ENCODE measurements at regions of chr10 and their contacts with region 1.

Region 1: GRCh38 chr10:91163269-91163868 is 57.1 kb upstream of the PCGF5 start:
- DNase-seq: peak; percentile 72
- H3K4me3 ChIP-seq: peak overlapping the region; percentile 93 to 98 (median 98)
- H3K27ac ChIP-seq: peak overlapping the region; percentile 94 to 98 (median 97)
- H3K4me1 ChIP-seq: peaks cover 4 to 29% (median 11%) of the 10 kb centered on the region in 4 donors
- H3K27me3 ChIP-seq: no peaks in the 10 kb centered on the region
- CTCF ChIP-seq: peak in 1 of 5 experiments; percentile 17
- EP300 ChIP-seq: no peak
- POLR2A ChIP-seq: peak; percentile 57

Region 2: GRCh38 chr10:90741926-90742565 is 421.3 kb before region 1 on chr10:
- in situ Hi-C with region 1: no loop called
- intact Hi-C with region 1: no loop called
- DNase-seq: no peak
- H3K4me3 ChIP-seq: no peak overlapping the region
- H3K27ac ChIP-seq: no peak overlapping the region
- H3K4me1 ChIP-seq: no peaks in the 10 kb centered on the region
- H3K27me3 ChIP-seq: no peaks in the 10 kb centered on the region
- CTCF ChIP-seq: no peak
- EP300 ChIP-seq: no peak
- POLR2A ChIP-seq: no peak

Region 3: DNA sequence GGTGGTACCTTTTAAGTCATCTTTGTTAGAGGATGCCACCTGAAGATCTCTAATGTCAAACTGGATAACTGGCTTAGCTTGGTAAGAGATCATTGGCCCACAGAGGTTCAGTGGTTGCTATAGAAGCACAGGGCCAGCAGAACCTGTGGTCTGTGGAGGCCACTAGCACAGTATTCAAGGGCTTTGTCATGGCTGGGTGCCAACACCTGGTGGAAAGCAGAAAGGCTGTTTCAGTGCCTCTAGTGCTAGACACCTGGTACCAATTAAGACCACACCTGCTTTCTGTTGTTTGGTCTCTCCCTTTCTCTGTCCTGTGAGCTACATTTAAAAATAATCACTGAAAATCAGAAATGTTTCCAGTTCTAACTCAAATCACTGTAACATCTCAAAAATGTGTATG is 47.1 kb after region 1 on chr10:
- in situ Hi-C with region 1: loop called in 1 of 4 experiments (anchors 10 kb)
- intact Hi-C with region 1: no loop called
- DNase-seq: peak; percentile 89
- H3K4me3 ChIP-seq: no peak overlapping the region
- H3K27ac ChIP-seq: peak overlapping the region in 2 of 4 donors; percentile 15 to 64
- H3K4me1 ChIP-seq: peaks cover 0 to 37% (median 15%) of the 10 kb centered on the region in 4 donors
- H3K27me3 ChIP-seq: no peaks in the 10 kb centered on the region
- CTCF ChIP-seq: no peak
- EP300 ChIP-seq: no peak
- POLR2A ChIP-seq: no peak

Region 4: DNA sequence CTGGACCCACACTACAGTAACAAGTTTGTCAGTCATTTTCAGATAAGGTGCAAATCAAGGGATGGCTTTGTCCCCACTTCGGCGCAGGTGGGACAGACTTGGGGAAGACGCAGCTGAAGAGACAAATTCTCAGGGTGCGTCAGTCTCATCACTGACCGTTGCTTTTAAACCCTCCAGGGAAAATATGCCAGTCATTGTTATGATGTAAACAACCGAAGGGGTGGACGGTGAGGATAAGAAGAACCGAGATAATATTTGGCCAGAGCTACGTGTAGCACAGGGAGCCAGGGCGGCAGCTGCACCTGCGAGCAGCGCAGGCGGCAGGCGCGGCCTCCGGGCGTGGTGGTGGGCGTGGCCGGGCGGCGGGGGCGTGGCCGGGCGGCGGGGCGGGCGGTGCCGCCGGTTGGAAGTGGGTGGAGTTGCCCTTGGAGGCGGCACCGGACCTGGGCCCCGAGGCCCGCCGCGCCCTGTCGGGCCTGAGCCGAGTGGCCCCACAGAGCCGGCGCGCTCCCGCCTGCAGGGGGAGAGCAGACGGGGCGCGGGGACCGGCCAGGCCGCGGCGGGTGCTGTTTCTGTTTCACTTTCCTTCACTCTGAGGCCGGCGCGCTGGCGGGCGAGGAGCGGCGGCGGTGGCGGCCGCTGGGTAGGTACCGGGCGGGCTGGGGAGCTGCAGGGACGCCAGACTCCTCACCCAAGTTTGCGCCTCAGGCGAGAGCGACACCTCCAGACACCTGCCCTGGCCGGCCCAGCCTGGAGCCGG is 57.0 kb after region 1 on chr10 and contains the start of gene PCGF5:
- in situ Hi-C with region 1: loop called in 1 of 4 experiments (anchors 10 kb)
- intact Hi-C with region 1: loop called (anchors 1 kb)
- DNase-seq: peak; percentile 95
- H3K4me3 ChIP-seq: peak within 1 kb of the TSS; percentile 84 to 99 (median 91)
- H3K27ac ChIP-seq: peak within 1 kb of the TSS; percentile 97 to 99 (median 98)
- H3K4me1 ChIP-seq: peaks cover 12 to 50% (median 29%) of the 10 kb centered on the region in 4 donors
- H3K27me3 ChIP-seq: no peaks in the 10 kb centered on the region
- CTCF ChIP-seq: peak; percentile 32 to 78 (median 41)
- EP300 ChIP-seq: no peak
- POLR2A ChIP-seq: peak; percentile 87
- total RNA-seq, gene PCGF5: 26.3 to 94.1 (median 57.0) TPM

Region 5: GRCh38 chr10:92011560-92012214 is 848.3 kb after region 1 on chr10:
- in situ Hi-C with region 1: no loop called
- intact Hi-C with region 1: no loop called
- DNase-seq: no peak
- H3K4me3 ChIP-seq: no peak overlapping the region
- H3K27ac ChIP-seq: no peak overlapping the region
- H3K4me1 ChIP-seq: no peaks in the 10 kb centered on the region
- H3K27me3 ChIP-seq: no peaks in the 10 kb centered on the region
- CTCF ChIP-seq: no peak
- EP300 ChIP-seq: no peak
- POLR2A ChIP-seq: no peak